ENCODE measurements at regions of chr19 and their contacts with region 1.

Region 1: GRCh38 chr19:39970675-39971379 is at the start of gene PSMC4:
- DNase-seq: peak; percentile 100
- ATAC-seq: peak; percentile 97 to 99
- H3K4me3 ChIP-seq: peak within 1 kb of the TSS; percentile 70
- H3K27ac ChIP-seq: peak within 1 kb of the TSS; percentile 91
- H3K4me1 ChIP-seq: peaks cover 18% of the 10 kb centered on the region
- CTCF ChIP-seq: peak; percentile 99
- EP300 ChIP-seq: no peak
- POLR2A ChIP-seq: peak; percentile 81
- RAD21 ChIP-seq: peak; percentile 99 to 100
- polyA plus RNA-seq, gene PSMC4: 192 and 208 TPM in 2 replicates

Region 2: DNA sequence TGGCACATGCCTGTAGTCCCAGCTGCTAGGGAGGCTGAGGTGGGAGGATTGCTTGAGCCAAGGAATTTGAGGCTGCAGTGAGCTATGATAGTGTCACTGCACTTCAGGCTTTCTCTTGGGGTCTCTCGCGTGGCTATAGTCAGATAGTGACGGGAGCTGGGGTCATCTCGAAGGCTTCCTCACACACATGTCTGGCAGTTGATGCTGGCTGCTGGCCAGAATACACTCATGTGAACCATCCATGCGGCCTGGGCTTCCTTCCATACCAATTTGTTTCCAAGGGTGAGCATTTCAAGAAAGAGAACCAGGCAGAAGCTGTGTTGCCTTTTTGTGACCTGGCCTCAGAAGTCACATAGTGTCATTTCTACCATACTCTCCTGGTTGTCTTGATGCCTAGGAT is 165.7 kb before region 1 on chr19:
- CTCF ChIA-PET with region 1: interaction called, 12 read pairs
- POLR2A ChIA-PET with region 1: no interaction called
- DNase-seq: no peak
- ATAC-seq: no peak
- H3K4me3 ChIP-seq: no peak overlapping the region
- H3K27ac ChIP-seq: no peak overlapping the region
- H3K4me1 ChIP-seq: no peaks in the 10 kb centered on the region
- CTCF ChIP-seq: no peak
- EP300 ChIP-seq: no peak
- POLR2A ChIP-seq: no peak
- RAD21 ChIP-seq: no peak

Region 3: GRCh38 chr19:39878398-39878797 is 92.4 kb before region 1 on chr19:
- CTCF ChIA-PET with region 1: interaction called, 40 read pairs
- POLR2A ChIA-PET with region 1: interaction called, 3 read pairs
- DNase-seq: no peak
- ATAC-seq: peak; percentile 11 to 17; a peak in 4 of 6 replicates
- H3K4me3 ChIP-seq: no peak overlapping the region
- H3K27ac ChIP-seq: no peak overlapping the region
- H3K4me1 ChIP-seq: no peaks in the 10 kb centered on the region
- CTCF ChIP-seq: no peak
- EP300 ChIP-seq: no peak
- POLR2A ChIP-seq: no peak
- RAD21 ChIP-seq: no peak

Region 4: GRCh38 chr19:39924389-39924788 is 46.4 kb before region 1 on chr19:
- CTCF ChIA-PET with region 1: interaction called, 26 read pairs
- POLR2A ChIA-PET with region 1: interaction called, 6 read pairs
- DNase-seq: no peak
- ATAC-seq: no peak
- H3K4me3 ChIP-seq: no peak overlapping the region
- H3K27ac ChIP-seq: no peak overlapping the region
- H3K4me1 ChIP-seq: no peaks in the 10 kb centered on the region
- CTCF ChIP-seq: no peak
- EP300 ChIP-seq: no peak
- POLR2A ChIP-seq: no peak
- RAD21 ChIP-seq: no peak

Region 5: DNA sequence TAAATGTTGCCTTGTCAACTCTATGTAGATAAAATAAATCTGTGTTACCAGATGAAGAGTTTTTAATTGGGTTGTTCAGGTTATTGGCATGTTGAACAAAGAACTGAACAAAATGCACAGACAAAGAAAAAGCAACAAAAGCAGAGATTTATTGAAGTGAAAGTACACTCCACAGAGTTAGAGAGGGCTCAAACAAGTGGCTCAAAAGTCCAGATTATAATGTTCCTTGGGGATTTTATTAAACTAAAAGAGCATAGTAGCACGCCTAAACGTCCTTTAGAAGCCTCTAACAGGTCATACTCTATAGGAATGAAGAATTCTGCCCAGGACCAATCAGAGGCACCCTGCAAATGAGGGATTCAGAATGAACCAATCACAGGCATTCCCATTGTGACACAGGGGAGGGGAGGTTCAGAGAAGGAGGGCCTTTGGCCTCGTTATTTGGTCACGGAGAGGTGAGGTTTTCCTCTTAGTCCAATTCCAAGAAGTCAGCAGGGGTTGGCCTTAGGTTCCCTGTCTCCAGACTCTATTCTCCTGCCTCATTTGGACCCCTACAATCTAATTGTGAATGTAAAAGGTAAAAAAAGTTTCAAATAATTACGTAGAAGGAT is 13.0 kb after region 1 on chr19:
- CTCF ChIA-PET with region 1: interaction called, 68 read pairs
- POLR2A ChIA-PET with region 1: interaction called, 8 read pairs
- DNase-seq: no peak
- ATAC-seq: peak in 1 of 2 experiments; percentile 35; a peak in 3 of 6 replicates
- H3K4me3 ChIP-seq: no peak overlapping the region
- H3K27ac ChIP-seq: no peak overlapping the region
- H3K4me1 ChIP-seq: no peaks in the 10 kb centered on the region
- CTCF ChIP-seq: no peak
- EP300 ChIP-seq: no peak
- POLR2A ChIP-seq: no peak
- RAD21 ChIP-seq: no peak

Measured in A549 (cell line).